ENCODE measurements at regions of chr19 and their contacts with region 1.

Region 1: DNA sequence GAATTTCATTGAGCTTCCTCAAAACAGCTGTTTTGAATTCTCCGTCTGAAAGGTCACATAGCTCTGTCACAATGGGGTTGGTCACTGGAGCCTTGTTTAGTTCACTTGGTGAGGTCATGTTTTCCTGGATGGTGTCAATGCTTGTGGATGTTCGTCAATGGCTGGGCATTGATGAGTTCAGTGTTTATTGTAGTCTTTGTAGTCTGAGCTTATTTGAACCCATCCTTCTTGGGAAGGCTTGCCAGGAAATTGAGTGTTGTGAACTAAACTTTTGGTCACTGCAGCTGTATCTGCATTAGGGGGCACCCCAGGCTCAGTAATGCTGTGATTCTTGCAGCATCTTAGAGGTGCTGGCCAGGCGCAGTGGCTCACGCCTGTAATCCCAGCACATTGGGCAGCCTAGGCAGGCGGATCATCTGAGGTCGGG is 22.0 kb downstream of the BLOC1S3 start:
- DNase-seq: peak; percentile 75
- ATAC-seq: peak; percentile 83
- H3K4me3 Mint-ChIP-seq: no peak overlapping the region
- H3K27ac Mint-ChIP-seq: no peak overlapping the region
- H3K4me1 Mint-ChIP-seq: no peaks in the 10 kb centered on the region
- H3K27me3 Mint-ChIP-seq: peaks cover 33% of the 10 kb centered on the region
- CTCF ChIP-seq: no peak

Region 2: GRCh38 chr19:45187421-45188100 is 13.0 kb before region 1 on chr19:
- CTCF ChIA-PET with region 1: interaction called, 14 read pairs
- POLR2A ChIA-PET with region 1: no interaction called
- DNase-seq: peak; percentile 46
- ATAC-seq: peak; percentile 90
- H3K4me3 Mint-ChIP-seq: no peak overlapping the region
- H3K27ac Mint-ChIP-seq: no peak overlapping the region
- H3K4me1 Mint-ChIP-seq: no peaks in the 10 kb centered on the region
- H3K27me3 Mint-ChIP-seq: peaks cover 9% of the 10 kb centered on the region; the same call in 1 of the 2 replicates
- CTCF ChIP-seq: peak; percentile 75

Region 3: DNA sequence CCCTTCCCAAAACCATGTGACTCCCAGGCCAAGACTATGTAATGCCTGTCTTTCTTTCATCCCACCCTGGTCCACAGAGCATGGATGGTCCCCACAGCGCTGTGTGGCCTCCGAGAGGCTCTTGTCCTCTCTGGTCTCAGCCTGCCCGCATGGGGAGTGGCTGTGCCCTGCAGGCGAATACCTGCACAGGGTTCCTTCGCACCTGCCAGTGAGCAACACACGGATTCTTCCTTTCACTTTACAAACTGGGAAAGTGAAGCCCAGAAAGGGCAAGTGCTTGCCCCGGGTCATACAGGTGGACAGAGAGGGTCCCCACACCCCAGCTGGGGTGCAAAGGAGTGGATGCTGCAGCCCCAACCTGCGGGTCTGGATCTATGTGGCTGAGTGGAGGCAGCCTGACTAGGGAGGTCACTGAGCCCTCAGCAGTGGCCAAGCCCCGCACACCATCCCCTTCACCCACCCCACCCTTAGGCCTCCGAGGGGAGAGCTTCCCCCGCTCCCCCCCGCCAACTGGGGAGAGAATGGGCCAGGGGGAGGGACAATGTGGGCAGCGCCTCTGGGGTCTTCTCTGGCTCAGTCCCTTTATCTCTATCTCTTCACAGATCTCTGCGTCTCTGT is 49.7 kb after region 1 on chr19:
- CTCF ChIA-PET with region 1: interaction called, 45 read pairs
- POLR2A ChIA-PET with region 1: no interaction called
- DNase-seq: no peak
- ATAC-seq: no peak
- H3K4me3 Mint-ChIP-seq: peak overlapping the region; percentile 89
- H3K27ac Mint-ChIP-seq: no peak overlapping the region
- H3K4me1 Mint-ChIP-seq: peaks cover 22% of the 10 kb centered on the region
- H3K27me3 Mint-ChIP-seq: peaks cover 25% of the 10 kb centered on the region
- CTCF ChIP-seq: no peak

Region 4: DNA sequence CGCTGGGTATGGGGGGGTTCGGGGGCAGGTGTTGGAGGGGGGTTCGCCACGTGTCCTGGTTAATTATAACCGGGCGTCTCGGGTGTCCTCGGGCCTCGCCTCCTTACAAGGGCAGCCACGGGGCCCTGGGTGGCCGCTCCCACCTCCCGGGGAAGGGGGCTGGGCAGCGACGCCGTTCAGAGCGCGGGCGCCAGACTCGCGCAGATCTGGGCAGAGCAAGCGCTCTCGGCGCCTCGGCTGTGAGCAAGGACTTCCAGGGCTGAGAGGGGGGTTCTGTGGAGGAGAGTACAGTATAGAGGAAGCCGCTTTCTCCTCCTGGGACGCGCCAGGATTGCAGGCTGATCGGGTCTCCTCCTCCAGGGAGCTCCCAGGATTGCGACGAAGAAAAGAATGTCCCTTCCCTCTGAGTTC is 123.1 kb after region 1 on chr19:
- CTCF ChIA-PET with region 1: interaction called, 11 read pairs
- POLR2A ChIA-PET with region 1: no interaction called
- DNase-seq: peak; percentile 48
- ATAC-seq: peak; percentile 36
- H3K4me3 Mint-ChIP-seq: peak overlapping the region; percentile 56
- H3K27ac Mint-ChIP-seq: no peak overlapping the region
- H3K4me1 Mint-ChIP-seq: peaks cover 22% of the 10 kb centered on the region
- H3K27me3 Mint-ChIP-seq: peaks cover 20% of the 10 kb centered on the region
- CTCF ChIP-seq: no peak

Region 5: GRCh38 chr19:45340232-45340898 is 139.8 kb after region 1 on chr19 and contains the start of gene KLC3:
- CTCF ChIA-PET with region 1: interaction called, 33 read pairs
- POLR2A ChIA-PET with region 1: no interaction called
- DNase-seq: peak; percentile 66
- ATAC-seq: peak; percentile 55
- H3K4me3 Mint-ChIP-seq: peak within 1 kb of the TSS; percentile 63
- H3K27ac Mint-ChIP-seq: no peak within 1 kb of the TSS
- H3K4me1 Mint-ChIP-seq: peaks cover 2% of the 10 kb centered on the region; the same call in 1 of the 2 replicates
- H3K27me3 Mint-ChIP-seq: peaks cover 15% of the 10 kb centered on the region
- CTCF ChIP-seq: no peak
- total RNA-seq, gene KLC3: 5.2 to 6.5 TPM (median 5.3 TPM) in 3 replicates

Measured in WTC11 (cell line).